GM10248 (cell line): ENCODE measurements at regions of chr6 and their contacts with region 1.

Region 1: GRCh38 chr6:120894077-120894476 is 440.2 kb downstream of the TBC1D32 start:
- DNase-seq: no peak
- CTCF ChIP-seq: no peak

Region 2: GRCh38 chr6:120916844-120917243 is 22.8 kb after region 1 on chr6:
- CTCF ChIA-PET with region 1: interaction called, 10 read pairs
- POLR2A ChIA-PET with region 1: no interaction called
- DNase-seq: no peak
- CTCF ChIP-seq: no peak